IMR-90 (cell line): ENCODE measurements at regions of chr2 and their contacts with region 1.

Region 1: GRCh38 chr2:147025646-147026585 is 818.9 kb upstream of the ACVR2A start:
- DNase-seq: no peak
- ATAC-seq: peak; percentile 12
- H3K4me3 ChIP-seq: no peak overlapping the region
- H3K27ac ChIP-seq: peak overlapping the region; percentile 77; the same call in 1 of the 2 replicates
- H3K4me1 ChIP-seq: peaks cover 11% of the 10 kb centered on the region; the same call in 1 of the 2 replicates
- H3K27me3 ChIP-seq: no peaks in the 10 kb centered on the region; the same call in 1 of the 2 replicates
- CTCF ChIP-seq: no peak
- POLR2A ChIP-seq: no peak
- RAD21 ChIP-seq: no peak

Region 2: DNA sequence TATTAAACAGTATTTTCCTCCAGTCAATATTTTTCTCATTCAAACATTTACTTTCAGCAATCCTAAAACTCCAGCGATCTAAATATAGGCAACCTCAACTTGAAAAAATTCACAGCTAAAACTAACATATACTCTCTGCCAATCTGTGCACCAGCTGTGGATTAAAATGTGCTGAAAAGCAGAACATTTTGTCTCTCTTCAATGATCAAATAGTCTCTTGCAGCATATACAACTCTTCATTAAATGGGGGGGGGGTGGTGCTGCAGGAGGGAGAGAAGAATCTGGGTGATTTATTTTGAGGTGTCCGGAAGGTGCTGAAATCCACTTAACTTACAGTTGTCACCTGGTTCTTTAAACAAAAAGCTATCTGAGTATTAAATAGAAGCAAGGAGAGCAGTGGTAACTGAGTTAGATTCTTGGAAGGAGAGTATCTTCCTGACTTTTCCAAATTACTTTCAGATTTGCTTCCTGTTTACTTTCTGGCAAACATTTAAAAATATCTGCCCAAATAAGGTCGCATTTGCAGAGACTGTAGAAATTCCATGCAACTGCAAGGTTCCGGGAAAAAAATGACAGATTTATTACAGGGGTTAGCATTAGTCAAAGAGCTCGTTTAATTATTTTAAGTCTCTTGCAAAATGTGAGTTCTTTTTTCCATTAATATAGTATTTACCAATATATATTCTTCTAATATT is 85.8 kb before region 1 on chr2:
- CTCF ChIA-PET with region 1: no interaction called
- POLR2A ChIA-PET with region 1: no interaction called
- dilution Hi-C with region 1: no loop called
- in situ Hi-C with region 1: no loop called
- intact Hi-C with region 1: loop called (anchors 5 kb)
- DNase-seq: no peak
- ATAC-seq: peak; percentile 74
- H3K4me3 ChIP-seq: no peak overlapping the region
- H3K27ac ChIP-seq: peak overlapping the region; percentile 97; the same call in 1 of the 2 replicates
- H3K4me1 ChIP-seq: no peaks in the 10 kb centered on the region; the same call in 1 of the 2 replicates
- H3K27me3 ChIP-seq: no peaks in the 10 kb centered on the region
- CTCF ChIP-seq: no peak
- POLR2A ChIP-seq: no peak
- RAD21 ChIP-seq: no peak

Region 3: DNA sequence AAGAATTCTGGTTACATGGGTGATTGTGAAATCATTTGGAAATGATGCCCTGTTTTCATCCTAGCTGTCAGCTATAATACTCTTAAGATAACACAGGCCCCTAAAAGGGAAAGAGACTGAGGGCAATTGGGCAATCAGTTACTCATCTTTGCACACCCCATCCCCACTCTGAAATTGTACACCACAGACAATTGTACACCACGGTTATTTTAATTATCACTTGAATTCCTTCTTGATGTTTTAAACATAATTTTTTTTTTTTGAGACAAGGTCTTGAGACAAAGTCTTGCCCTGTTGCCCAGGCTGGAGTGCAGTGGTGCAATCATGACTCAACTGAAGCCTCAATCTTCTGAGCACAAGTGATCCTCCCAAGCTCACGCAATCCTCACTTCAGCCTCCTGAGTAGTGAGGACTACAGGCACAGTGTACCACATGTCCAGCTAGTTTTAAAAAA is 43.5 kb before region 1 on chr2:
- CTCF ChIA-PET with region 1: no interaction called
- POLR2A ChIA-PET with region 1: no interaction called
- dilution Hi-C with region 1: no loop called
- in situ Hi-C with region 1: no loop called
- intact Hi-C with region 1: loop called (anchors 2 kb)
- DNase-seq: peak; percentile 69
- ATAC-seq: peak; percentile 88
- H3K4me3 ChIP-seq: no peak overlapping the region
- H3K27ac ChIP-seq: peak overlapping the region; percentile 24; the same call in 1 of the 2 replicates
- H3K4me1 ChIP-seq: peaks cover 2% of the 10 kb centered on the region; the same call in 1 of the 2 replicates
- H3K27me3 ChIP-seq: no peaks in the 10 kb centered on the region; the same call in 1 of the 2 replicates
- CTCF ChIP-seq: no peak
- POLR2A ChIP-seq: no peak
- RAD21 ChIP-seq: no peak